Activated CD8-positive, alpha-beta memory T cell treated with anti-CD3 and anti-CD28 coated beads, Interleukin-2, amount 10 ng/mL, durations not matched to agents 7 days and 5 days (primary cell): ENCODE measurements at regions of chr11 and their contacts with region 1.

Region 1: GRCh38 chr11:3014057-3014938 is 22.2 kb upstream of the NAP1L4 start:
- DNase-seq: peak; percentile 95
- ATAC-seq: peak; percentile 83
- H3K4me3 Mint-ChIP-seq: peak overlapping the region; percentile 23
- H3K27ac Mint-ChIP-seq: peak overlapping the region; percentile 98
- H3K4me1 Mint-ChIP-seq: peaks cover 92% of the 10 kb centered on the region
- H3K27me3 Mint-ChIP-seq: no peaks in the 10 kb centered on the region

Region 2: DNA sequence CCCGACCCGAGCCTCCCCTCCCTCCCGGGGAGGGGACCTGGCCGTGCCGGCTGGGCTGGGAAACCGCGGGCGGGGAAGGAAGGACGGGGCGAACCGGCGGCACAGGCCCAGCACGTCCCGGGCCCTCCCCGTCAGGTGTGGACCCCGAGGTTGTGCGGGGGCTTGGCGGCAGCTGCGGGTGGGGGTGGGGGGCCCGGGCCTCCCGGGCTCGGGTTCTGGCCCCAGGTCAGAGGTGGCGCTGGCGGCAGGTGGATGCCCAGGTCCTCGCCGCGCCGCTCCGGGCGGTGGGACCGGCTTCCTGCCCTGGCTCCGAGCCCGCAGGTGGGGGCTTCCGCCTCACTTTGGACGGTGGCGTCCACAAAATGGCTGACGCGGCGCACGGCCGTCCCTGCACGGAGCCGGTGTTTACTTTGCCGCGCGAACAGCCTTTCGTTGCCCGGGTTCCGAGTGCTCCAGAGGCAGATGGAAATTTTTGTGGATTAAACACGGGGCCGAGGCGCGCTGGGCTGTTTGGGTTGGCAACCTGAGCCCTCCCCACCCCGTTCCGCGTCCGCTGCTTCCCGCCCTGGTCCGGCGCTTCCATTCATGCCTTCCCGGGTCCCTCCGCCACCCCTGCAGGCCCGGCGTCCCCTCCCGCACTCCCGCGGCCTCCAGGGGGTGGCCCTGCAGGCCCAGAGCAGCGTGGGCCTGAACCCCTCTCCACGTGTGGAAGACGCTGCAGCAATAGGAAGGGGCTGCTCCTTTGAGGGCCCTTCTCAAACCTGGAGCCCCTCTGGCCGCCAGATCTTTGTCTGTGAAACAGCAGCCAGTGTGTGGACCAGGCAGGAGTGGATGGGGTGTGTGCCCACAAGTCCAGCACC is 222.5 kb before region 1 on chr11:
- CTCF ChIA-PET with region 1: no interaction called
- DNase-seq: no peak
- ATAC-seq: peak; percentile 47
- H3K4me3 Mint-ChIP-seq: peak overlapping the region; percentile 26
- H3K27ac Mint-ChIP-seq: no peak overlapping the region
- H3K4me1 Mint-ChIP-seq: no peaks in the 10 kb centered on the region
- H3K27me3 Mint-ChIP-seq: peaks cover 7% of the 10 kb centered on the region

Region 3: DNA sequence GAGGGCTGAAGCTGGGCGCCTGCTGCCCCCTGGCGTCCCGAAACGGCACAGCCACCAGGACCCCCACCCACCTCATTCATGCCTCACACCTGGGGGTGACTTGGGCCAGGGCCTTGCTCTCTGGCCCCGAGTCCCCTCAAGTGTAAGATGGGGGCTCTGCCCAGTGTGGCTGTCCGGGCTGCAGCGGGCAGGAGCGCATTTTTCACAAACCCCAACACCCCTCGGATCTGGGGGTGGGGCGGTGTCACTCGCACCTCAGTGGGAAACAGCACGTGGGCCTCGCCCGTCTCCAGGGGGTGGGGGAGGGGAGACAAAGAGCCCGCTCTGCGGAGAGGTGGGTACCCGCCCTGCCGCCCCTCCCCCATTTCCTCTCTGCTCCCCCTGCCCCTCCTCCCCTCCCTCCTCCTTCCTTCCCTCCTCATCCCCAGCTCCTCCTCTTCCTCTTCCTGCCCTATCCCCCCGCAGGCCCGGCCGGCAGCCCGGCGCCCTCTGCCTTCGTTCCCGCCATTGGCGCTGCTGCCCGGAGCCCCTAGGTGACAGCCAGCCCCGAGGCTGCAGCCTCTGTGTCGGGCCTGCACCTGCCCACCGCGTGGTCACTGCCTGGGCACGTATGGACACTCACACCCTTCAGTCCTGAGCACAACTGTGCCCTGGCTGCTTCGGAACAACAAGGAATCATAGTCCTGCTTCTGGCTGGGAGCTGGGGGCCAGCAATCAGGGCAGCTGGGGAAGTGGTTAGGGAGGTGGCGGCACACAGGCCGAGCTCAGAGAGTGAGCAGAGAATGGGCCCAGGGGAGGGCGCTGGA is 121.9 kb before region 1 on chr11:
- CTCF ChIA-PET with region 1: interaction called, 11 read pairs
- DNase-seq: peak; percentile 81
- ATAC-seq: peak; percentile 74
- H3K4me3 Mint-ChIP-seq: peak overlapping the region; percentile 77
- H3K27ac Mint-ChIP-seq: peak overlapping the region; percentile 74
- H3K4me1 Mint-ChIP-seq: peaks cover 18% of the 10 kb centered on the region
- H3K27me3 Mint-ChIP-seq: peaks cover 4% of the 10 kb centered on the region

Region 4: DNA sequence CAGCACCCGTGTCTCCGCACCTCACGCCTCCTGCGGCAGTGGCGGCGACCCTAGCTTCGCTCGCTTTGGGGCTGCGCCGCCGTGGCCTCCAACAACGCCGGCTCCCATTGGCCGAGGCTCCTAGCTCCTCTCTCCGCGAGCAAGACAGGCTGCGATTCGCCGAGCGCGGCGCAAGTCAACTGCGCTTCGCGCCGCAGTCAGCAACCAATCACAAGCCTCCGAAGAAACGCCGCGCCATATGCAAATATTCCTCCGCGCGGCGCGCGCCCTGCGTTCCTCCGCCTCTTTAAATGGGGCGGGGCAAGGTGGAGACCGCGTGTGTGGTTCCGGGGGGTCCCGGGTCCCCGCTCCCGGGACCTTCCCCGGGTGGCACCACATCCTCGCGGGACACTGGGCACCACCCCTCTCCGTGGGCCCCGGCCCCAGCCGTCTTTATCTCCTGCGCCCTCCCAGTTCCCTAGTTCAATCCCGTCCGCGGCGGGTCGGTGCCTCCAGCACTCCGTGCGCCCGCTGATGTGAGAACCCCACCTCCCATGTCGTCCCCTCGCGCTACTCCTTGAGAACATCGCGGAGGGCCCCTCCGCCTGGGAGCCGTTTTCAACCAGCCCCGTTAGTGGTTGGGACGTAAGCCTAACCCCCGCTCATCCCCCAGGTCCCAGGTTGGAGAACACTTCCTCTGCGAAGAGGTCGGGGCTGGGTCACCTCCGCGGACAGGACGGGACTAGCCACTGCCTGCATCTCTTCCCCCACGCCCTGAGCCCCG is 21.9 kb before region 1 on chr11 and contains the start of gene NAP1L4:
- CTCF ChIA-PET with region 1: interaction called, 23 read pairs
- DNase-seq: peak; percentile 98
- ATAC-seq: peak; percentile 90
- H3K4me3 Mint-ChIP-seq: peak within 1 kb of the TSS; percentile 95
- H3K27ac Mint-ChIP-seq: peak within 1 kb of the TSS; percentile 98
- H3K4me1 Mint-ChIP-seq: peaks cover 15% of the 10 kb centered on the region
- H3K27me3 Mint-ChIP-seq: no peaks in the 10 kb centered on the region
- total RNA-seq, gene NAP1L4: 347 to 389 TPM

Region 5: GRCh38 chr11:3057069-3057963 is 43.0 kb after region 1 on chr11 and contains the start of gene CARS1:
- CTCF ChIA-PET with region 1: interaction called, 13 read pairs
- DNase-seq: peak; percentile 97
- ATAC-seq: peak; percentile 98
- H3K4me3 Mint-ChIP-seq: peak within 1 kb of the TSS; percentile 88
- H3K27ac Mint-ChIP-seq: peak within 1 kb of the TSS; percentile 88
- H3K4me1 Mint-ChIP-seq: peaks cover 38% of the 10 kb centered on the region
- H3K27me3 Mint-ChIP-seq: peaks cover 10% of the 10 kb centered on the region
- total RNA-seq, gene CARS1: 109 to 119 TPM